Sigmoid colon (tissue), 7 donors: ENCODE measurements at regions of chr16 and their contacts with region 1.

Region 1: DNA sequence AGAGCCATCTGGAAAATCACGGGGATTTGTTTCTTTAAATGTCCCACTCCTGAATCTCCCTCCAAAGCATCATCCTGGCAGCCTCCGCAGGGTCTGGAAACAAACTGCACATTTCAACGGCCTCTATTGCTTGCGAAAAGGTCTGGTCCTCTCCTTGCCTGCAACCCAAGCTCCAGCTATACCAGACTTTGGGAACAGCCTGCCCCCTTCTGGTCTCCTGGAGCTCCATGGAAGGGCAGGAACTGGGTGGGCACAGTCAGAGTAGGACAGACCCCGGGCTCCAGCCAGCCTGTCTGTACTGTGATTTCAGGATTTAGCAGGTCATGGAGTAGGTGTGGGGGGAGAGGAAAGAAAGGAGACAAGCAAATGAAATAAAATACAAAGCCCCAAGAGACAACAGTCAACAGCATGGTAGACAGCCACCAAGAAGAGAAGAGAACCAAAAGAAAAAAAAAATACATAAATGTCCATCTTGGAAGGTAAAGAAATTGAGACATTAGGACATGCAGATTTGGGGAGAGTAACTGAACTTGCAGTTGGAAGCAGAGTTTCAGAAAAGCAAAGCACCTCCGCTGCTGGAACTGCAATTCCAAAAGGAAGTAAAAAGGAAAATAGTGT is 2.7 kb downstream of the XYLT1 start:
- DNase-seq: peak; percentile 94
- H3K4me3 ChIP-seq: peak overlapping the region; percentile 87 to 97 (median 88)
- H3K27ac ChIP-seq: peak overlapping the region; percentile 86 to 94 (median 91)
- H3K4me1 ChIP-seq: peaks cover 0 to 60% (median 48%) of the 10 kb centered on the region in 4 donors
- H3K27me3 ChIP-seq: no peaks in the 10 kb centered on the region
- CTCF ChIP-seq: peak; percentile 67 to 86 (median 77)
- EP300 ChIP-seq: no peak
- POLR2A ChIP-seq: no peak

Region 2: DNA sequence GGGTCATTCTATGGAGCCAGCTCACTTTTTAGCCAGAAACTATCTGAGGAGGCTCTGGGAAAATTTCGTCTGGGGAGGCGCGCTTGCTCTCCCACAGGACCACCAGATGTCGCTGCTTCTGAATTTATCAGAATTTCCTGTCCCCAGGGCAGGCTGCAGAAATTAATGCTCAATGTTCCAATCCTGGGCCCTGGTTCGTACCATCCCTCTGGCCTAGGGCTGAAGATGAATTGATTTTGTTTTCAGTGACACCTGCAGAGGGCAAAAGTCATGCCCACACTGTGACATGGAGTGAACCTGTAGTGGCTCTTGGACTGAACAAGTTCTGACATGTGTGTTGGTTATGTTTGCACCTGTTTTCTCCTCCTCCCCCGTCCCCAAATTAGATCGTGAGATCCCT is 606.5 kb before region 1 on chr16:
- intact Hi-C with region 1: loop called (anchors 5 kb)
- DNase-seq: no peak
- H3K4me3 ChIP-seq: no peak overlapping the region
- H3K27ac ChIP-seq: no peak overlapping the region
- H3K4me1 ChIP-seq: no peaks in the 10 kb centered on the region
- H3K27me3 ChIP-seq: peaks cover 0 to 5% (median 0%) of the 10 kb centered on the region in 3 donors
- CTCF ChIP-seq: peak in 3 of 4 experiments; percentile 40 to 69 (median 57)
- EP300 ChIP-seq: no peak
- POLR2A ChIP-seq: no peak

Region 3: DNA sequence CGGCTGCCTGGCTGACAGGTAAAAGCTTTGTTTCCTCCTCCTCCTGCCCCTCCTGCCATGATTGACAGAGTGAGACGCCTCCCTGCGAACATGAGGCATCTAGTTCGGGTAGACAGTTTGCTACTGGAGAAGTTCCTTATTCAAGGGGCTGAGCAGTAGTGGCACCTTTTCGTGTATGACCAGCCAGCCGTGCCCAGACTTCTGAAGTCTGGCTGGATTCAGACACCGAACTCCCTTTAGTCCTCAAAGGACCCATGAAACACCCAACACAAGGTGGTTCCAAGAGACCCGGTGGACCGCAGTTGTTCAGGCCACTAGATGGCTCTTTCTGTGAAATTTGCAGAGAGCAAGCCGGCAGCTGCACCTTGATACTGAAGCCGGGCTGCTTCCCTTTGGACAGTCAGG is 190.1 kb before region 1 on chr16:
- intact Hi-C with region 1: loop called (anchors 2 kb)
- DNase-seq: no peak
- H3K4me3 ChIP-seq: no peak overlapping the region
- H3K27ac ChIP-seq: peak overlapping the region in 2 of 4 donors; percentile 4 to 40
- H3K4me1 ChIP-seq: peaks cover 0 to 33% (median 30%) of the 10 kb centered on the region in 4 donors
- H3K27me3 ChIP-seq: no peaks in the 10 kb centered on the region
- CTCF ChIP-seq: peak in 2 of 4 experiments; percentile 33
- EP300 ChIP-seq: no peak
- POLR2A ChIP-seq: no peak

Region 4: GRCh38 chr16:17313085-17313611 is 154.9 kb before region 1 on chr16:
- intact Hi-C with region 1: loop called (anchors 2 kb)
- DNase-seq: peak; percentile 98
- H3K4me3 ChIP-seq: no peak overlapping the region
- H3K27ac ChIP-seq: peak overlapping the region; percentile 89 to 97 (median 96)
- H3K4me1 ChIP-seq: peaks cover 0 to 86% (median 81%) of the 10 kb centered on the region in 4 donors
- H3K27me3 ChIP-seq: no peaks in the 10 kb centered on the region
- CTCF ChIP-seq: no peak
- EP300 ChIP-seq: peak; percentile 99 to 100 (median 100)
- POLR2A ChIP-seq: peak in 1 of 2 donors; percentile 46

Region 5: DNA sequence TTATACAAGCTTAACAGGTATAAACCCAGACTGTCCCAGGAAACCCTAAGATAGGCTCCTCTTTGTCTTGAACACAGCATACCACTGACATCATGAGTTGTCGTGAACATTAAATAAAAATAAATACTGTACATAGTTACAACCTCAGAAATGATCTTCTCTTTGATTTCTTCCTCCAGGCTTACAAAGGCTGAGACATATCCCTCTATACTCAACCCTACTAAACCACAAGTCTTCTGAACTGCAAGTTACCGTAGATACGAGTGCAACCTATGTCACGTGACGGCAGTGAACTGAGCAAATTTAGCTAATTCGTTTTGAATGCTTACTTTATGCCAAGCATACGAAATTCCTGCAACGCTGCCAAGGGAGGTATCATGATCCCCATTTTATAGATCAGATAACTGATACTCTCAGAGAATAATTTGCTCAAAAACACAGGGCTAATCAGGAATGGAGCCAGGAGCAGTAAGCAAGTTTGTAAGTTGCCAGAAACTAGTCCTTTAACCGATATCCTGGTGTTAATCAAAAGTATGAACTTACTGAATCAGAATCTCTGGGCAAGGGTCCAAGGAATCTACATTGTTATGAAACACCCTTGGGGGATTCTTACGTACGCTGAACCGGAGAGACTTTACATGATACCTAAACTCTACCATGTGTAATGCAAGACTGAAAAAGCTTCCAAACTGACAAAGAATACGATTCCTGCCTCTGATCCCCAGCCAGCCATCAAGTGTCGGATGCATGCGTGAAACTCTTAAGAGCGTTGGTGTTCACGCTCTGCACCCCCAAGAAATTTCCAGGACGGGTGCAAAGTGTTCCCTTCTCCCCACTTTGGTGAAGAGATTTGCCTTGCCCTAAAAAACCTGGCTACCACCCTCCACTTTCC is 103.5 kb before region 1 on chr16:
- intact Hi-C with region 1: loop called (anchors 5 kb)
- DNase-seq: no peak
- H3K4me3 ChIP-seq: peak overlapping the region in 1 of 4 donors; percentile 9
- H3K27ac ChIP-seq: peak overlapping the region; percentile 50 to 83 (median 73)
- H3K4me1 ChIP-seq: peaks cover 0 to 92% (median 77%) of the 10 kb centered on the region in 4 donors
- H3K27me3 ChIP-seq: no peaks in the 10 kb centered on the region
- CTCF ChIP-seq: no peak
- EP300 ChIP-seq: no peak
- POLR2A ChIP-seq: no peak